Activated T-helper 2 cell treated with anti-CD3 and anti-CD28 coated beads, Interferon-gamma antibody, Interleukin-2, Interleukin-4, amounts not matched to agents 10 μg/mL and 5 μg/mL and 100 μg/mL, durations not matched to agents 14 hours and 24 hours and 36 hours (primary cell): ENCODE measurements at regions of chr5 and their contacts with region 1.

Region 1: DNA sequence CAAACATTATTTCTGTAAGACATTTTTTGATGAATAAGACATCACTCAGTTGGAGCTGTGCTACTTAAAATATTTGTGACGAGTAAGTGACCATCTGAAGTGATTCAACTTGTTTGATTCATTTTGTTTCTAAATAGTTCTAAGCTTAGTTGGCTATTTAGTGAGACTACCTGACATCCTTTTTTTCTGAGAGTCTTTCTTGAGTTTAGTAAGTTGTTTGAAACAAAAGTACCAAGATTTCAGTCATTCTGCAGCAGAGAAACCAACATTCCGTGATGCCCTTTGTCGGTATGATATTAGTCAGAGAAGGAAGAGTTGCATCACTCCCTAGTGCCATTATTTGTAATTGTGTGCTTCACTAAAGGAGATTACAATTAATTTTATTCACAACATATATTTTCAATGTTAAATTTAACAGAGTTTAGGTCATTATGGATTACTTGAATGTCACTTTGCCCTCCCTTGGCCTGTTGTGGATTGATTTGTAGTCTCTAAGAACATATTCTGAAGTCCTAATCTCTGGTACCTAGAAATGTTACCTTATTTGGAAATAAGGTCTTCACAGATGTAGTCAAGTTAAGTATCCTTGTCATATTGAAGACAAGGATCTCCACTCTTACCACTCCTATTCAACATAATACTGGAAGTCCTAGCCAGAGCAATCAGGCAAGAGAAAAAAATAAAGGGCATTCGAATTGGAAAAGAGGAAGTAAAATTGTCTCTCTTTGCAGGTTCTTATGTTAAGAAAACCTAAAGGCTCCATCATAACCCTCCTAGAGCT is 212.2 kb downstream of the PCSK1 start:
- DNase-seq: no peak
- H3K4me3 Mint-ChIP-seq: no peak overlapping the region
- H3K27ac Mint-ChIP-seq: peak overlapping the region; percentile 64
- H3K4me1 Mint-ChIP-seq: peaks cover 15% of the 10 kb centered on the region
- H3K27me3 Mint-ChIP-seq: no peaks in the 10 kb centered on the region

Region 2: GRCh38 chr5:95870105-95870672 is 350.6 kb before region 1 on chr5:
- intact Hi-C with region 1: loop called (anchors 2 kb)
- DNase-seq: peak; percentile 28
- H3K4me3 Mint-ChIP-seq: peak overlapping the region; percentile 37
- H3K27ac Mint-ChIP-seq: peak overlapping the region; percentile 89
- H3K4me1 Mint-ChIP-seq: peaks cover 45% of the 10 kb centered on the region
- H3K27me3 Mint-ChIP-seq: peaks cover 4% of the 10 kb centered on the region